Left ventricle myocardium superior (tissue), 1 donor: ENCODE measurements at regions of chr18 and their contacts with region 1.

Region 1: GRCh38 chr18:49550621-49551339 is 11.1 kb upstream of the LIPG start:
- DNase-seq: no peak
- ATAC-seq: no peak

Region 2: GRCh38 chr18:49784427-49785185 is 233.8 kb after region 1 on chr18:
- intact Hi-C with region 1: loop called (anchors 10 kb)
- DNase-seq: no peak
- ATAC-seq: peak; percentile 46

Region 3: GRCh38 chr18:49858309-49859020 is 307.7 kb after region 1 on chr18:
- intact Hi-C with region 1: loop called (anchors 5 kb)
- DNase-seq: peak; percentile 62
- ATAC-seq: peak; percentile 75